K562 (cell line): ENCODE measurements at regions of chrX and their contacts with region 1.

Region 1: DNA sequence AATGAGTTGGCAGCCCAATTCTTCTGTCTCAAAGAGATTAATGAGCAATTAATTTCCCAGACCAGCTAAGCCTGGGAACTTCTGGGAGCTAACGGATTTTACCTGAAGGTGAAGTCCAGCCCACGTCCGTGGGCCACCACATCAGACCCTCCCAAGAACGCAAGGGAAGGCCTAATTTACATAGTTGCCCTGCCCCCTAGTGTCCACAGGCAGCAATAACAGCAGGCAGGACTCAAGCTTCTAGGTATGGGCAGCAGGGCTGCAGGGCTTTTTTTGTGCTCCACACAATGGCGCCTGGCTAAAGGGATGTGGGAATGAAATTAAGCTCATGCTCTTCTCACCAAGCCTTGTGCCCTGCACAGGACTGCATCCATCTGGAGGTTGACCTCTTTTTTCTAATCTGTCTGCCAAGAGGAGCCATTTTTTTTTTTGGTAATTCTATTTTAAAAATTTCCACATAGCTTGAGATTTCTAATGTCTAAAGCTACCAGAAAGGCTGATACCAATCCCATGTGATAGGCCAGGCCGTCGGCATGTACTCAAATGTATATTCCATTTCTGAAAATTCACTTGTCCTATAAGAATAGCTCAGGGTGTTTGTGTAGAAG is 111.9 kb upstream of the TMEM164 start:
- DNase-seq: peak; percentile 68 to 83 (median 70)
- ATAC-seq: peak; percentile 88
- H3K4me3 ChIP-seq: no peak overlapping the region
- H3K27ac ChIP-seq: no peak overlapping the region
- H3K4me1 ChIP-seq: peaks cover 7 to 21% of the 10 kb centered on the region in 2 experiments; a peak in 4 of 5 replicates
- H3K27me3 ChIP-seq: no peaks in the 10 kb centered on the region
- CTCF ChIP-seq: peak; percentile 83 to 90 (median 84)
- EP300 ChIP-seq: no peak
- POLR2A ChIP-seq: no peak
- RAD21 ChIP-seq: peak; percentile 57 to 77

Region 2: DNA sequence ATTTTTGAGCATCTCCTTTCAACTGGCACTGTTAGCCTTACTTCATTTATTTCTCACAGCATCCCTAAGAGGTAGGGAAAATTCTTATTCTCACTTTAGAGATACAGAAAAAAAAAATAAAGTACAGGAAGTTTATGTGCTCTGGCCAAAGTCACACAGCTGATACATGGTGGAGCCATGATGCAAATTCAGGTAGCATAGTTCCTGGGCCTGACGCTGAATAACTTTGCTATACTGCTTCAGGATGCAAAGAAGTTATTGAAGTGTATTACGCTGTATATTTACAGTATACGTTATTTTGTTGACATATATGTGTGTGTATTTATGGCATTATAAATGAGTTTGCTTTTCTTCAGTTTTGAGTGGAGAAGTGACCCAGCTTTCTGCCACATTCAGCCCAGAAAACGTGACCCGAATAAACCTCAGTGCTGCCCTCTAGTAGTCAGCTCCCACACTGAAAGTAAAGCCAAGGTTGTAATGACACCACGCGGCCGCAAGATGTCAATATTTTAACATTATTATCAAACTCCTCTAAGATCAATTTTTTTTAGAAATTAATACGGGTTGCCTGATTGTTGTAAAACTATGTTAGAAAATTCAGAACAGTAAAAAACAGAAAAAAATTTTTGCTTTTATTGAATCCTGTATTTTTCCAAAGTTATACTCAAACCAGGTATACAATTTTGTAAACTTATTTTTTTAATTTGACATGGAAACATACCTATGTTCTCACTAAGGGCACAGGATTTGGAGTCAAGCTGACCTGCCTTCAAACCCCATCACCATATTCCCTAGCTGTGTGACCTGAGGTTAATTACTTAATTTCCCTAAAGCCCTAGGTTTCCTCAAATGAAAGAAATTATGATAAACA is 405.3 kb before region 1 on chrX:
- CTCF ChIA-PET with region 1: interaction called, 13 read pairs
- POLR2A ChIA-PET with region 1: no interaction called
- in situ Hi-C with region 1: no loop called
- intact Hi-C with region 1: loop called (anchors 2 kb)
- DNase-seq: peak; percentile 51 to 73 (median 64)
- ATAC-seq: peak; percentile 68
- H3K4me3 ChIP-seq: no peak overlapping the region
- H3K27ac ChIP-seq: no peak overlapping the region
- H3K4me1 ChIP-seq: no peaks in the 10 kb centered on the region
- H3K27me3 ChIP-seq: no peaks in the 10 kb centered on the region
- CTCF ChIP-seq: peak; percentile 91 to 99 (median 99)
- EP300 ChIP-seq: no peak
- POLR2A ChIP-seq: no peak
- RAD21 ChIP-seq: peak; percentile 79 to 82

Region 3: DNA sequence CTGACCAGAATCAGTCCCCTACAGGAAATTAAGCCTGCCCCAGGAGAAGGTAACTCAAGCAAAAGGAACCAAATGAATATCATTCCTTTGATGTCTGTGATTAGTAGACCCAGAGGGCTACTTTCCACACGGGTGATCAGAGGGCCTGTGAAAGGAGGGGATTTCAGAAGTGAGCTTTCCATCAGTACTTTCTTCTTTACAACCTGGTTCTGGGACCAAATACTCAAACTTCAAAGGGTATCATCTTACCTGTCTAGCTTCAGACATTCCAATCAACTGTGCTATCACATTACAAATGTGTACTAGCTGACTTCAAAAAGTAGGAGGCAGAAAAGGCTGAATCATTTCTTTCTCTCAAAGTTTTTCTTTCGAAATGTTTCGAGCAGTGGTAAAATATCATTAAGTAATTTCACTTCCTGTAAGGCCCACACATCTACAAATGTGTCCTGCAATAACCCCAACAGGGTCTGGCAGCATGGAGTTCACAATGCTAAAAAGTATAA is 181.8 kb before region 1 on chrX:
- CTCF ChIA-PET with region 1: interaction called, 16 read pairs
- POLR2A ChIA-PET with region 1: interaction called, 3 read pairs
- in situ Hi-C with region 1: loop called (anchors 10 kb)
- intact Hi-C with region 1: loop called (anchors 1 kb)
- DNase-seq: no peak
- ATAC-seq: no peak
- H3K4me3 ChIP-seq: no peak overlapping the region
- H3K27ac ChIP-seq: no peak overlapping the region
- H3K4me1 ChIP-seq: no peaks in the 10 kb centered on the region; a peak in 2 of 5 replicates
- H3K27me3 ChIP-seq: no peaks in the 10 kb centered on the region
- CTCF ChIP-seq: no peak
- EP300 ChIP-seq: no peak
- POLR2A ChIP-seq: no peak
- RAD21 ChIP-seq: no peak

Region 4: DNA sequence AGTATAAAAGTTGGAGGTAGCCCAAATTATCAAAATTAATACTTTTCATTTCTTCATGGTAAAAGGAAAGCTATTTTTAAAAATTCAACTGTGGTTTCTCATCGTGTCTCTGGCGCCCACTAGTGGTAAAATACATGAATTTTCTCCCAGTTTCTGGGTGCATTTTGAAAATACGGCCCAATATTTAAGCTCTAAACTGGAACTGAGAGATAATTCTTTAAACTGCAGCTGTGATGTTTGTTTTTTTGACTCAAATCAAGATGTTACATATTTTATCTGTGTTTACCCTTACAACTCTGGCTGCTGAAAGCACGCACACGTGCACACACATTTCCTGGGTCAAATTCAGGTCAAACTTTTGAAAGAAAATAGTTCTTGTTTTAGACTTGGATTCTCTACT is 34.0 kb before region 1 on chrX:
- CTCF ChIA-PET with region 1: no interaction called
- POLR2A ChIA-PET with region 1: no interaction called
- in situ Hi-C with region 1: no loop called
- intact Hi-C with region 1: loop called (anchors 2 kb)
- DNase-seq: peak; percentile 20 to 57 (median 26)
- ATAC-seq: no peak
- H3K4me3 ChIP-seq: no peak overlapping the region
- H3K27ac ChIP-seq: no peak overlapping the region
- H3K4me1 ChIP-seq: peaks cover 0 to 9% of the 10 kb centered on the region in 2 experiments; a peak in 2 of 5 replicates
- H3K27me3 ChIP-seq: no peaks in the 10 kb centered on the region
- CTCF ChIP-seq: peak; percentile 56 to 79 (median 64)
- EP300 ChIP-seq: no peak
- POLR2A ChIP-seq: no peak
- RAD21 ChIP-seq: peak; percentile 66 to 78